ENCODE measurements at regions of chr17 and their contacts with region 1.

Region 1: GRCh38 chr17:70552230-70552981 is 383.1 kb downstream of the KCNJ2 start:
- DNase-seq: peak in 1 of 2 experiments; percentile 45
- H3K4me3 ChIP-seq: no peak overlapping the region
- H3K4me3 Mint-ChIP-seq: no peak overlapping the region
- H3K27ac Mint-ChIP-seq: no peak overlapping the region
- H3K4me1 ChIP-seq: no peaks in the 10 kb centered on the region
- H3K4me1 Mint-ChIP-seq: peaks cover 6% of the 10 kb centered on the region
- H3K27me3 ChIP-seq: no peaks in the 10 kb centered on the region
- H3K27me3 Mint-ChIP-seq: no peaks in the 10 kb centered on the region
- CTCF ChIP-seq: peak; percentile 47 to 70

Region 2: DNA sequence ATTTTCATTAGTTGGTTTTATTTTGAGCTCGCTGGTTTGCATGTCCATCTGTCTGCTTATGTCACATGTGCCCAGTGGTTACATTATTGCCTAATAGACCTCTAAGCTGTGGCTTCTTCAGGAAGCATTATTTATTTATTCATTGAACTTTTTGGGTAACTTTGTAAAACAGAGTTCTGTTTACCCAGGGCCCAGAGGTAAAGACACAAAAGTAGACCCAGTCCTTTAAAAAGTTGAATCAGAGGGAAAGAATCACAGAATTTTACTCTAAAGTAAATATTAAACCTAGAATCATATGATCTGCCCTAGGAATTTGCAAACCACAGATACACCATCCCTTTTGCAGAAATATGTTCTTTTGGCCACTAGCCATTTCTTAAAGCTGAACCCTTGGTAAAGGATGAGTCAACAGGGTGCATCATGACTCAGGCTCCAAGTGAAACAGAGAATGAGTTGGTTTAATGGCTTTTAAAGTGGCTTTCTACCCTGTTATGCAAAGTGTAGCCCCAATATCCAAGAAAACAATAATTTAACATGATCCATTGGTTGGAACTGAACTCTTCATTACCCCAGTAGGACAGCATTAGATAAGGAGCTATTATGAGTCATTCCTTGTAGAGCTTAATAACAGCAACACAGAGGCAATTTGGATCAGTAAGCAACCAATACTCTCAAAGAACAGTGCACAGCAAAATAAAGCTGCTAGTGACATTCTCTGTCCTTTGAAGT is 146.8 kb before region 1 on chr17:
- CTCF ChIA-PET with region 1: no interaction called
- POLR2A ChIA-PET with region 1: no interaction called
- intact Hi-C with region 1: loop called (anchors 5 kb)
- DNase-seq: no peak
- H3K4me3 ChIP-seq: no peak overlapping the region
- H3K4me3 Mint-ChIP-seq: no peak overlapping the region
- H3K27ac Mint-ChIP-seq: no peak overlapping the region
- H3K4me1 ChIP-seq: peaks cover 13% of the 10 kb centered on the region
- H3K4me1 Mint-ChIP-seq: peaks cover 5% of the 10 kb centered on the region
- H3K27me3 ChIP-seq: no peaks in the 10 kb centered on the region
- H3K27me3 Mint-ChIP-seq: no peaks in the 10 kb centered on the region
- CTCF ChIP-seq: no peak

Region 3: DNA sequence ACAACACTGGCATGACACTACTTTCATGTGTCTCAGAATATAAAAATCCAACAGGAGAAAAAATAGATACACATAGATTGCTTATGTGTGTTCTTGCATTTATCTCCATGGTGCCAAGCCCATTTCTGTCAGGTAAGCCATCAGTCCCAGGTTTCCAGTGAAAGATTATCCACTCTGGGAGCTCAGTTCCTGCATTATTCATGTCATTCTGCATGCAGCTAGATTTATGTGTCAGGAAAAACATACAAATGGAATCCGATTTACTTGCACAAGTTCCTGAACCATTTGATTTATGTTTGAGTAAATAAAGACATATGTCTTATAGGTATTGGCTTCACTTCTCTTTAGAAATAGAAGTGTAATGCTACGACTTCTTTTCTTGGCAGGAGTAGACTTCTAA is 186.7 kb after region 1 on chr17:
- CTCF ChIA-PET with region 1: no interaction called
- POLR2A ChIA-PET with region 1: no interaction called
- intact Hi-C with region 1: no loop called
- DNase-seq: no peak
- H3K4me3 ChIP-seq: no peak overlapping the region
- H3K4me3 Mint-ChIP-seq: no peak overlapping the region
- H3K27ac Mint-ChIP-seq: no peak overlapping the region
- H3K4me1 ChIP-seq: no peaks in the 10 kb centered on the region
- H3K4me1 Mint-ChIP-seq: no peaks in the 10 kb centered on the region
- H3K27me3 ChIP-seq: no peaks in the 10 kb centered on the region
- H3K27me3 Mint-ChIP-seq: peaks cover 11% of the 10 kb centered on the region
- CTCF ChIP-seq: no peak

Measured in Caco-2 (cell line).